ENCODE measurements at regions of chr2 and their contacts with region 1.

Region 1: GRCh38 chr2:189236066-189236465 is 56.5 kb upstream of the COL5A2 start:
- DNase-seq: peak; percentile 51
- ATAC-seq: no peak
- H3K4me3 ChIP-seq: no peak overlapping the region
- H3K27ac ChIP-seq: no peak overlapping the region
- H3K4me1 ChIP-seq: no peaks in the 10 kb centered on the region; the same call in 1 of the 2 replicates
- H3K27me3 ChIP-seq: no peaks in the 10 kb centered on the region
- CTCF ChIP-seq: no peak
- POLR2A ChIP-seq: no peak
- RAD21 ChIP-seq: no peak

Region 2: DNA sequence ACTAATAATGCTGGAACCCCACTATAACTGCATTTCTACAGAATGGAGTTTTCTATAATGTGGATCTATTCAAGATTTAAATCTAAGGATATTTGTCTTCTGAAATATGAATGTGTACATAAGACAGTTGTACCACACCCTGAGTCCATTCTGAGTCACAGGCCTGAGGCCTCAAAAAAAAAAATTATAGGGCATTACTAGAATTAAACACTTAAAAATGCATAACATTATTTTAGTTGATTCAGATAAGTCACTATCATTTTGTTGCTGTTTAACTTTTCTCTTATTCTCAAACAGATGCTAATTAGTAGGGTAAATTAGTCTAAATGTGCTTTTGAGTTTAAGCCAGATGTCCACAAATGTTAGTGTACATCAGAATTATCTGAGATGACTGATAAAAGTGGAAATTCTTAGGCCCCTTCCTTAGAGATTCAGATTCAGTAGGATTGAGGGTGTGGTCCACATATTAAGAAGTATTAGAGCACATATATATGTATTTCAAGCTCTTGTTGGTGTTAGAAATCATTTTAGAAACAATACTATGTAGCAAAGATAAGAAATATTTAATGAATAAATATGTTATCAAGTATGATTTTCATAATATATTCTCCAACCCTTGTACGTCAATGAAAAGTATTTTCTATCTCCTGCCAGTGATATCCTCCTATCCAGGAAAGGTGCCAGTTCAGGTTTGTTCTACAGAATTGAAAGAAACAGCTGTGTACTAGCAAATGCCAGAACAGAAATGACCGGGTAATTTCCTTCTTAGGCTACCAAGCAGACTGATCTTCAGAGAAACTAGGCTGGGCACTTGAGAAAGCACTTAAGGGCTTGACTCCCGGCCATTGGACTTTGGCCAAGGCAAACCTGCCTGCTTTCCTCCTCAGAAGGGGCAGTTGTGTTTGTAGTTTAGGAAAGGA is 14.0 kb before region 1 on chr2:
- CTCF ChIA-PET with region 1: no interaction called
- POLR2A ChIA-PET with region 1: no interaction called
- dilution Hi-C with region 1: no loop called
- in situ Hi-C with region 1: no loop called
- intact Hi-C with region 1: loop called (anchors 2 kb)
- DNase-seq: peak; percentile 57
- ATAC-seq: peak; percentile 52; the same call in 1 of the 2 replicates
- H3K4me3 ChIP-seq: no peak overlapping the region
- H3K27ac ChIP-seq: no peak overlapping the region
- H3K4me1 ChIP-seq: peaks cover 8% of the 10 kb centered on the region
- H3K27me3 ChIP-seq: no peaks in the 10 kb centered on the region
- CTCF ChIP-seq: no peak
- POLR2A ChIP-seq: no peak
- RAD21 ChIP-seq: no peak